IMR-90 (cell line): ENCODE measurements at regions of chr14 and their contacts with region 1.

Region 1: GRCh38 chr14:51979088-51979709 is 10.1 kb upstream of the RTRAF start:
- DNase-seq: peak; percentile 79
- ATAC-seq: peak; percentile 83
- H3K4me3 ChIP-seq: no peak overlapping the region
- H3K27ac ChIP-seq: no peak overlapping the region
- H3K4me1 ChIP-seq: peaks cover 6% of the 10 kb centered on the region
- H3K27me3 ChIP-seq: peaks cover 10% of the 10 kb centered on the region
- CTCF ChIP-seq: peak; percentile 85
- POLR2A ChIP-seq: no peak
- RAD21 ChIP-seq: peak; percentile 90

Region 2: DNA sequence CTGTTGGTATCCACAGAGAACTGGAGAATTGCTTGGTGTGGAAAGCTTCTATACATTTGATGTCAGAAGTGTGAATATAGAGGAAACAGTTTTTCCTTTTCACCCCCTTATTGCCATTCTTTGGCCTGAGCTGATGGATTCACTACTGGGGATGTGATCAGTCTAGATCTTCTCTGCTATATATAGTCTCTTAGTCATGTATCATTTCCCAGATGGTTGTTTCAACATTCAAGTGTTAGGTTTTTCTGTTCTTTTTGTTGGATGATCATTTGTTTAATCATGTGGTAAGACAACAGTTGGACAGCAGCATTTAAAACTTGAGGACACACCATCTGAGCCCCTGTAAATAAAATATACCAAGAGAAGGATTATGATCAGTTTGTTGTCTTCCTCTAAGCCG is 709.6 kb before region 1 on chr14:
- CTCF ChIA-PET with region 1: no interaction called
- POLR2A ChIA-PET with region 1: no interaction called
- dilution Hi-C with region 1: no loop called
- in situ Hi-C with region 1: loop called (anchors 5 kb)
- intact Hi-C with region 1: no loop called
- DNase-seq: no peak
- ATAC-seq: no peak
- H3K4me3 ChIP-seq: no peak overlapping the region
- H3K27ac ChIP-seq: no peak overlapping the region
- H3K4me1 ChIP-seq: no peaks in the 10 kb centered on the region
- H3K27me3 ChIP-seq: no peaks in the 10 kb centered on the region
- CTCF ChIP-seq: no peak
- POLR2A ChIP-seq: no peak
- RAD21 ChIP-seq: no peak

Region 3: GRCh38 chr14:51780006-51780692 is 199.1 kb before region 1 on chr14:
- CTCF ChIA-PET with region 1: interaction called, 7 read pairs
- POLR2A ChIA-PET with region 1: no interaction called
- dilution Hi-C with region 1: no loop called
- in situ Hi-C with region 1: loop called (anchors 10 kb)
- intact Hi-C with region 1: loop called (anchors 1 kb)
- DNase-seq: peak; percentile 59
- ATAC-seq: peak; percentile 73
- H3K4me3 ChIP-seq: no peak overlapping the region
- H3K27ac ChIP-seq: no peak overlapping the region
- H3K4me1 ChIP-seq: peaks cover 2% of the 10 kb centered on the region; the same call in 1 of the 2 replicates
- H3K27me3 ChIP-seq: no peaks in the 10 kb centered on the region
- CTCF ChIP-seq: peak; percentile 71
- POLR2A ChIP-seq: no peak
- RAD21 ChIP-seq: peak; percentile 84

Region 4: GRCh38 chr14:51860164-51860824 is 118.9 kb before region 1 on chr14 and contains the start of gene GNG2:
- CTCF ChIA-PET with region 1: interaction called, 6 read pairs
- POLR2A ChIA-PET with region 1: no interaction called
- dilution Hi-C with region 1: no loop called
- in situ Hi-C with region 1: no loop called
- intact Hi-C with region 1: loop called (anchors 2 kb)
- DNase-seq: peak; percentile 75
- ATAC-seq: peak; percentile 97
- H3K4me3 ChIP-seq: peak within 1 kb of the TSS; percentile 63
- H3K27ac ChIP-seq: peak within 1 kb of the TSS; percentile 66
- H3K4me1 ChIP-seq: peaks cover 25% of the 10 kb centered on the region
- H3K27me3 ChIP-seq: no peaks in the 10 kb centered on the region
- CTCF ChIP-seq: no peak
- POLR2A ChIP-seq: no peak
- RAD21 ChIP-seq: no peak
- total RNA-seq, gene GNG2: 13.1 and 18.6 TPM in 2 replicates

Region 5: GRCh38 chr14:52043690-52044089 is 64.5 kb after region 1 on chr14:
- CTCF ChIA-PET with region 1: no interaction called
- POLR2A ChIA-PET with region 1: no interaction called
- dilution Hi-C with region 1: no loop called
- in situ Hi-C with region 1: no loop called
- intact Hi-C with region 1: no loop called
- DNase-seq: peak; percentile 23
- ATAC-seq: 0 out of 2 replicates have a peak, but pooled peaks have one; percentile 21
- H3K4me3 ChIP-seq: no peak overlapping the region
- H3K27ac ChIP-seq: peak overlapping the region; percentile 10; the same call in 1 of the 2 replicates
- H3K4me1 ChIP-seq: peaks cover 35% of the 10 kb centered on the region
- H3K27me3 ChIP-seq: no peaks in the 10 kb centered on the region
- CTCF ChIP-seq: peak; percentile 51
- POLR2A ChIP-seq: no peak
- RAD21 ChIP-seq: peak; percentile 56